GM18951 (cell line): ENCODE measurements at regions of chr6 and their contacts with region 1.

Region 1: DNA sequence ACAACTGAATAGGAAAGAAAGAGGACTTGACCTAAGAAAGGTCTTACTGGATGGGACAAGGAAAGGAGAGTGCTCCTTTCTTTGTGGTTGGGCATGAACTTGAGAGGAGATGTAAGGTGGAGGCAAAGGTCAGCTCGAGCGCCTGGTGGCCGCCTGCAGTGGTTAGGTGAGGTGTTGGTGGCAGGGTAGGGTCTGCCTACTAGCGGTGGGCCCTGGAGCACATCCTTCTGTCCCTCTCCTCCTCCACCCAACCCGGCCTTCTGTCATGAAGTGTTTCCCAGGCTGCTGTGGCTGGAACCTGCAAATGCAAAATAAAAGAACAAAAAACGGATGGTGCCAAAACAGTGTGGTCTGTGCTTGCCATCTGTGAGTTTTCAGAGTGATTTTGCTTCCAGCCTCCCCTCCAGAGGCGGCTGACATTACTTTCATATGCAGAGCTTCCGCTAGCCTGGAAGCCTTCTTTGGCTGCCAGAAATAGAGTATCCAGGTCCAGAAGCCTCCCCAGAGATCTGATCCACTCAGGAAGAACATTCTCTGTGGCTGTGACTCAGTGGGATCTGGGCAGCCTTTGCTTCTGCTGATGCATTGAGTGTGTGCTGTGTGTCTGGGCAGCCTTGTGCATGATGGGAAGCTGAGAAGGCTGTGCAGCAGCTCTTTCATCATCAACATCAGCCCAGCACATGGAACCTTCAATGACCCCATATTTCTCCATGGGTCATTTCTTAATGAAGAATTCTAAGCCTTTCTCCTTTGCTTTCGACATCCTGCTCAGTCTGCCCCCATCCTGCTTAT is 79.8 kb upstream of the FAM184A start:
- POLR2A ChIP-seq: no peak

Region 2: DNA sequence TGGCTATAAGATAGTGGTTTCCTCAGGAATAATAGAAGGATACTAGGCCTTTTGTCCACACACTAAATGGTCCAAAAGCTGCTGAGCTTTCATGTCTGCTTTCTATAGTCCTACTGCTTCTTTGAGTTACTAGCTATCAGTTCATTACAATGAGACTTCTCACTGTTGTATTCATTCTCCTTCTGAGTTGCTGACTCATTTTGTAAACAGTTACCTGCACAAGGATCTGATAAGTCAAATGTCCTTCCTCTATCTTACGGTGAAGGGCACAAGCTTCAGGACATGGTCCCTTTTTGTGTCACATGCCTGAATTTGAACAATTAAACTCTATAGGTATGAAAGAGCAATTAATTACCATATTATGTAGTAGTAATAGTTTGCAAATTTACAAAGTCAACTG is 100.8 kb after region 1 on chr6:
- in situ Hi-C with region 1: no loop called
- POLR2A ChIP-seq: no peak

Region 3: DNA sequence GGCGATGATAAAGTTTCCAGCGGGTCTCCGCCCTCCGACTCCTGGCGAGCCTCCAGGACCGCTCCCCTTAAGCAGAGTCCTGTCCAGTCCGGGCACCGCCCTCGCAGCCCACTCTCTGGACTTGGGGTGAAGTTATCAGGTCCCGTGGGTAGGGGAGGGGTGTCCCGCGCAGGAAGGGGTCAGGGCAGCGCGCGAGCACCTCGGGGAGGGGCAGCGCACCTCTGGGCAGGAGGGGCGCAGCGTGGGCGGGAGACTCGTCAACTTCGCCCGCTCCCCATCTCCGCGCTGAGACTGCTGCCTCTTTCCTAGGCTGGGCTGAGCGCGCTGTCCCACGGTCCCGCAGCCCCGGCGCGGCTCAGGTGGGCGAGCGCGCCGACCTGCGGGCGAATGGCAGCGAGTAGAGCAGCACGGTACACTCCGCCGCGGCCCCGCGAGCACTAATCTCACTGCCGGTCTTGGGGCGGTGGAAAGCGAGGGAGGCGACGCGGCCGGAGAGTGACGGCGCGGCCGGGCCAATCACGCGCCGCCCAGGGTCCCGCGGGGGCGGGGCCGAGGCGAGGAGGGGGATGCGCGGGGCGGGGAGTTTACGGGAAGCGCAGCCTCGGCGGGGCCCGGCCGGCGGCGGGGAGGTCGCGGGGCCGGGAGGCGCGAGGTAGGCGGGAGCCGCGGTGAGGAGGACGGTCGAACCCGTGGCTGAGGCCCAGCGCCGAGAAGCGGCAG is 191.2 kb after region 1 on chr6 and contains the start of gene MAN1A1:
- in situ Hi-C with region 1: loop called (anchors 10 kb)
- POLR2A ChIP-seq: peak; percentile 98